WTC11 (cell line): ENCODE measurements at regions of chr16 and their contacts with region 1.

Region 1: GRCh38 chr16:8936421-8936820 is 27.3 kb downstream of the USP7 start:
- DNase-seq: peak; percentile 76
- ATAC-seq: peak; percentile 90
- H3K4me3 Mint-ChIP-seq: no peak overlapping the region
- H3K27ac Mint-ChIP-seq: peak overlapping the region; percentile 34; the same call in 1 of the 2 replicates
- H3K4me1 Mint-ChIP-seq: peaks cover 71% of the 10 kb centered on the region
- H3K27me3 Mint-ChIP-seq: no peaks in the 10 kb centered on the region
- CTCF ChIP-seq: peak; percentile 39; the same call in 1 of the 2 replicates

Region 2: DNA sequence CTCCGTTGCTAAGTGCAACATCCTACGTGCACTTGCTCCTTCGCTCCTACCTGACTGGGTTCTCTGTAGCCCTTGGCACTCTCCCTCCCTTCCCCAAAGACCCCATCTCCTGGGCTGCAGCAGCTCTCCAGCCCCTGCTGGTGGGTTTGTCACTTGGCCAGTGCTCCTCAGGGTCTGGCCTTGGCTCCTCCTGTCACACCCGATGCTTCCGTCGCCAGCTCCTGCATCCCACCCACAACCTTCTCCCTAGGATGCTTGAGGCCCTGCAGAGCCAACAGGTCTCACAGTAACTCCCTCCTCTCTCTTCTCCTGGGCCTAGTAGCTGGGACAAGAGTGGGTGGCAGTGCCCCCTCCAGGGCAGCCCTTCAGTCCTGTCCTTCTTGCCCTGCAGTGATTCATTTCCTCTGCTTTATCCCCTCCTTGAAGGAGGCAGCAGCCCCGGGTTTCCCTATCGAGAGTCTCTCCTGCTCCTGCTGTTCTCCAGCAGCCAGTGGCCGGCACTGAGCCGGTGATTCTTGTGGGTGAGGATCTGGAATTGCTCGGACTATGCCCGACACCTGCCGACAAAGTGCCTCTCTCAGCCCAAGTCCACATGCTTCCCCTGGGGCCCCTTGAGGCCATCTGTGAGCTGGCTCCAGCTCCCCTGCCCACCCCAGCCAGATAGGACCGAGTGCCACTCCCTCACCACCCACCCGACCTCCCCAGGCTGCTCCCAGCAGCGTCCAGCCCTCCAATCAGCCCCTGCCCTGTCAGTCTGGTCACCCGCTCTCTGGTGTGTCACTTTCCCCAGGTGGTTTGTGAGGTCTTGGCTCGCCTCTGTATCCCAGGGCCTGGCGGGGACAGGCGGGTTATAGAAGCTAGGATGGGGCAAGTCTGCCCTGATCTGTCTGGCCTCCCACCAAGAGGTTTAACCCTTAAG is 50.5 kb before region 1 on chr16:
- CTCF ChIA-PET with region 1: interaction called, 15 read pairs
- POLR2A ChIA-PET with region 1: no interaction called
- DNase-seq: no peak
- ATAC-seq: peak; percentile 61
- H3K4me3 Mint-ChIP-seq: no peak overlapping the region
- H3K27ac Mint-ChIP-seq: peak overlapping the region; percentile 36
- H3K4me1 Mint-ChIP-seq: peaks cover 15% of the 10 kb centered on the region
- H3K27me3 Mint-ChIP-seq: no peaks in the 10 kb centered on the region; the same call in 1 of the 2 replicates
- CTCF ChIP-seq: no peak

Region 3: GRCh38 chr16:8924214-8924613 is 12.2 kb before region 1 on chr16:
- CTCF ChIA-PET with region 1: interaction called, 30 read pairs
- POLR2A ChIA-PET with region 1: interaction called, 4 read pairs
- DNase-seq: no peak
- ATAC-seq: no peak
- H3K4me3 Mint-ChIP-seq: no peak overlapping the region
- H3K27ac Mint-ChIP-seq: peak overlapping the region; percentile 34
- H3K4me1 Mint-ChIP-seq: peaks cover 3% of the 10 kb centered on the region; the same call in 1 of the 2 replicates
- H3K27me3 Mint-ChIP-seq: no peaks in the 10 kb centered on the region
- CTCF ChIP-seq: no peak

Region 4: DNA sequence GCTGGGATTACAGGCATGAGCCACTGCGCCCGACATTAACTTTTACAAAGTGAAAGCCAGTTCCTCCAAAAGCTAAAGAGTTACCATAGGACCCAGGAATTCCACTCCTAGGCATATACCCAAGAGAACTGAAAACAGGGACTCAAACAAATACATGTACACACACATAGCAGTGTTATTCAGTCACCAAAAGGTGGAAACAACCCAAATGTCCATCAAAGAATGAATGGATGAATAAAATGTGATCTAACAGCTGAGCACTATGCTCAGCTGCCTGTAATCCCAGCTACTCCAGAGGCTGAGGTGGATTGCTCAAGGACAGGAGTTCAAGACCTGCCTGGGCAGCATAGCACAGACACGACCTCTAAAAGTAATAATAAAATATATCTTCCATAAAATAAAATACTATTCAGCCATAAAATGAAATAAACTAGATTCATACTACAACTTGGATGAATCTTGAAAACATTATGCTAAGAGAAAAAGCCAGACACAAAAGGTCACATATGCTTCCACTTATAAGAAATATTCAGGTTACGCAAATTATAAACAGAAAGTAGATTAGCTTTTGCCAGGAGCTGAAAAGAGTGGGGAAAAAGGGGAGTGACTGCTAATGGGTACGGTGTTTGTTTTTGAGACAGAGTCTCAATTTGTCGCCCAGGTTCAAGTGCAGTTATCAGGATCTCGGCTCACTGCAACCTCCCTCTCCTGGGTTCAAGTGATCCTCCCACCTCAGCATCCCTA is 36.6 kb after region 1 on chr16:
- CTCF ChIA-PET with region 1: interaction called, 34 read pairs
- POLR2A ChIA-PET with region 1: no interaction called
- DNase-seq: no peak
- ATAC-seq: no peak
- H3K4me3 Mint-ChIP-seq: no peak overlapping the region
- H3K27ac Mint-ChIP-seq: no peak overlapping the region
- H3K4me1 Mint-ChIP-seq: peaks cover 3% of the 10 kb centered on the region
- H3K27me3 Mint-ChIP-seq: peaks cover 4% of the 10 kb centered on the region
- CTCF ChIP-seq: no peak

Region 5: DNA sequence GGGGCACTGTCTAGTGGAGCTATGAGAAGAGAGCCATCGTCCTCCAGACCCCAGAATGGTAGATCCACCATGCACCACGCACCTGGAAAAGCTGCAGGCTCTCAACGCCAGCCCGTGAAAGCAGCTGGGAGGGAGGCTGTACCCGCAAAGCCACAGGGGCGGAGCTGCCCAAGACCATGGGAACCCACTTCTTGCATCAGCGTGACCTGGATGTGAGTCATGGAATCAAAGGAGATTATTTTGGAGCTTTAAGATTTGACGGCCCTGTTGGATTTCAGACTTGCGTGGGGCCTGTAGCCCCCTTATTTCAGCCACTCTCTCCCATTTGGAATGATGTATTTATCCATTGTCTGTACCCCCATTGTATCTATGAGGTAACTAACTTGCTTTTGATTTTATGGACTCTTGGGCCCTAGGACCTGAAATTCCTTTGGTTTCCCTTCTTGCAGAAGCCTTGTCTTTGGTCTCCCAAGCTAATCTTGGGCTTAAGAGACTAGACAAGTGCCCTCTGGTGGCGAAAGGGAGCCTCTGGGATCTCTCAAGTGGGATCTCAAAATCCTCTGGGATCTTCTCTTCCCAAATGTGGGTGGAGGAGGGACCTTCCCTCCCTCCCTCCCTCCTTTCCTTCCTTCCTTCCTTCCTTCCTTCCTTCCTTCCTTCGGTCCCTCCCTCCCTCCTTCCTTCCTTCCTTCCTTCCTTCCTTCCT is 96.9 kb after region 1 on chr16:
- CTCF ChIA-PET with region 1: interaction called, 46 read pairs
- POLR2A ChIA-PET with region 1: interaction called, 5 read pairs
- DNase-seq: peak; percentile 74
- ATAC-seq: peak; percentile 85
- H3K4me3 Mint-ChIP-seq: no peak overlapping the region
- H3K27ac Mint-ChIP-seq: no peak overlapping the region
- H3K4me1 Mint-ChIP-seq: no peaks in the 10 kb centered on the region
- H3K27me3 Mint-ChIP-seq: no peaks in the 10 kb centered on the region
- CTCF ChIP-seq: peak; percentile 31; the same call in 1 of the 2 replicates

Region 6: GRCh38 chr16:9316615-9317014 is 380.2 kb after region 1 on chr16:
- CTCF ChIA-PET with region 1: no interaction called
- POLR2A ChIA-PET with region 1: no interaction called
- DNase-seq: no peak
- ATAC-seq: no peak
- H3K4me3 Mint-ChIP-seq: no peak overlapping the region
- H3K27ac Mint-ChIP-seq: no peak overlapping the region
- H3K4me1 Mint-ChIP-seq: peaks cover 5% of the 10 kb centered on the region; the same call in 1 of the 2 replicates
- H3K27me3 Mint-ChIP-seq: peaks cover 10% of the 10 kb centered on the region; the same call in 1 of the 2 replicates
- CTCF ChIP-seq: no peak